Endothelial cell of umbilical vein (primary cell): ENCODE measurements at regions of chr6 and their contacts with region 1.

Region 1: DNA sequence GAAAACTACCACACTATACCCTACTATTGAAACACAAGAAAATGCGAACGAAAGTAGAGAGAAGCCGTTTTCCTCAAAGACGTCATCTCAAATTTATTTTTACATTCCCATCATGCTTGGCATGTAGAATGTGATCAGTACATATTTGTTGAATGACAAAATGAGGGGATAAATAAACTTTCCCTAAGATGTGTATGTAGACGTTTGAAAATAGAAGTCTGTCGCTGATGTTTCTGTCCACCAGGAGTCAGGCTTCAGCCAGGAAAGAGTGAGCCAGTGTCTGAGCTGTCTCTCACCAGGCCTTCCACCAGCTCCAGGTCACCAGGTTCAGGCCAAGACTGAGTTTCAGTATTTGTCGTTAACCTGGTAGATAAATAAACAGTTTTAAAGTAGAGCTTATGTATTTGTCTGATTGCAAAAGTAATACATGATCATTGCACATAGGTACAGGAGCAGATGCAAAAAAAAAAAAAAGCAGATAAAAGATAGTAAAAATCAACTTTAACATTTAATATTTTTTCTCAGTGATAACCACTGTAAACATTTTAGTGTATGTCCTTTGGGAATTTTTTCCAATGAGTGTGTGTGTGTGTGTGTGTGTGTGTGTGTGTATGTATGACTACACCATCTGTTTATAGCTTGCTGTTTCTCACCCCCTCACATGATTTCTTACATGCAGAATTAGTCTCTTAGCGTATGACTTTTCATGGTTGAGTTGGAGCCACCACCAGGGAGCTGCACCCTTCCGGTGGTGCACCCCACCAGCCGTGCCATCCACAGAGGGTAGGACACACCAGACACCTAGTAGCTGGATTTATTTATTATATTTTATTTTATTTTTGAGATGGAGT is 26.2 kb downstream of the WRNIP1 start:
- DNase-seq: peak; percentile 92
- H3K4me3 ChIP-seq: no peak overlapping the region
- H3K27ac ChIP-seq: peak overlapping the region; percentile 25
- H3K4me1 ChIP-seq: peaks cover 5% of the 10 kb centered on the region
- H3K27me3 ChIP-seq: no peaks in the 10 kb centered on the region
- CTCF ChIP-seq: peak; percentile 71 to 79
- POLR2A ChIP-seq: no peak

Region 2: GRCh38 chr6:2765166-2765895 is 26.0 kb before region 1 on chr6 and contains the start of gene WRNIP1:
- CTCF ChIA-PET with region 1: interaction called, 14 read pairs
- POLR2A ChIA-PET with region 1: no interaction called
- dilution Hi-C with region 1: no loop called
- intact Hi-C with region 1: no loop called
- DNase-seq: peak; percentile 99
- H3K4me3 ChIP-seq: peak within 1 kb of the TSS; percentile 72 to 98 (median 97)
- H3K27ac ChIP-seq: peak within 1 kb of the TSS; percentile 79
- H3K4me1 ChIP-seq: peaks cover 40% of the 10 kb centered on the region
- H3K27me3 ChIP-seq: no peaks in the 10 kb centered on the region
- CTCF ChIP-seq: peak; percentile 65 to 66
- POLR2A ChIP-seq: no peak
- total RNA-seq, gene WRNIP1: 47.7 and 50.1 TPM in 2 replicates

Region 3: DNA sequence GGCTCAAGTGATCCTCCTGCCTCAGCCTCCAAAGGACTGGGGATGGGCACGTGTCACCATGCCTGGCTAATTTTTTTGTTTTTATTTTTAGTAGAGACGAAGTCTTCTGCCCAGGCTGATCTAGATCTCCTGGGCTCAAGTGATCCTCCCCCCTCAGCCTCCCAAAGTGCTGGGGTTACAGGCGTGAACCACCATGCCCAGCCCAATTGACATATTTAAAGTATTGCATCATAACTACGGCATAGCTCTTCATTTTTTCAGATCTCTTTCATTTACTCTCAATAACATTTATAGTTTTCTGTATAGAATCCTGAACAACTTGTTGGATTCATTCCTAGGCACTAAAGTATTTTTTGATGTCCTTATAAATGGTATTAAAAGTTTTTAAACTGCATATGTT is 37.3 kb after region 1 on chr6:
- CTCF ChIA-PET with region 1: interaction called, 11 read pairs
- POLR2A ChIA-PET with region 1: no interaction called
- dilution Hi-C with region 1: no loop called
- intact Hi-C with region 1: no loop called
- DNase-seq: no peak
- H3K4me3 ChIP-seq: no peak overlapping the region
- H3K27ac ChIP-seq: no peak overlapping the region
- H3K4me1 ChIP-seq: peaks cover 16% of the 10 kb centered on the region
- H3K27me3 ChIP-seq: no peaks in the 10 kb centered on the region
- CTCF ChIP-seq: no peak
- POLR2A ChIP-seq: no peak

Region 4: GRCh38 chr6:2853761-2854395 is 62.5 kb after region 1 on chr6:
- CTCF ChIA-PET with region 1: interaction called, 36 read pairs
- POLR2A ChIA-PET with region 1: no interaction called
- dilution Hi-C with region 1: no loop called
- intact Hi-C with region 1: loop called (anchors 1 kb)
- DNase-seq: peak; percentile 85
- H3K4me3 ChIP-seq: peak overlapping the region in 1 of 3 experiments; percentile 57
- H3K27ac ChIP-seq: peak overlapping the region; percentile 96
- H3K4me1 ChIP-seq: peaks cover 68% of the 10 kb centered on the region
- H3K27me3 ChIP-seq: no peaks in the 10 kb centered on the region
- CTCF ChIP-seq: peak; percentile 11 to 30
- POLR2A ChIP-seq: no peak

Region 5: GRCh38 chr6:2911171-2911570 is 119.8 kb after region 1 on chr6:
- CTCF ChIA-PET with region 1: interaction called, 23 read pairs
- POLR2A ChIA-PET with region 1: no interaction called
- dilution Hi-C with region 1: no loop called
- intact Hi-C with region 1: loop called (anchors 1 kb)
- DNase-seq: no peak
- H3K4me3 ChIP-seq: no peak overlapping the region
- H3K27ac ChIP-seq: no peak overlapping the region
- H3K4me1 ChIP-seq: no peaks in the 10 kb centered on the region
- H3K27me3 ChIP-seq: no peaks in the 10 kb centered on the region
- CTCF ChIP-seq: no peak
- POLR2A ChIP-seq: no peak

Region 6: DNA sequence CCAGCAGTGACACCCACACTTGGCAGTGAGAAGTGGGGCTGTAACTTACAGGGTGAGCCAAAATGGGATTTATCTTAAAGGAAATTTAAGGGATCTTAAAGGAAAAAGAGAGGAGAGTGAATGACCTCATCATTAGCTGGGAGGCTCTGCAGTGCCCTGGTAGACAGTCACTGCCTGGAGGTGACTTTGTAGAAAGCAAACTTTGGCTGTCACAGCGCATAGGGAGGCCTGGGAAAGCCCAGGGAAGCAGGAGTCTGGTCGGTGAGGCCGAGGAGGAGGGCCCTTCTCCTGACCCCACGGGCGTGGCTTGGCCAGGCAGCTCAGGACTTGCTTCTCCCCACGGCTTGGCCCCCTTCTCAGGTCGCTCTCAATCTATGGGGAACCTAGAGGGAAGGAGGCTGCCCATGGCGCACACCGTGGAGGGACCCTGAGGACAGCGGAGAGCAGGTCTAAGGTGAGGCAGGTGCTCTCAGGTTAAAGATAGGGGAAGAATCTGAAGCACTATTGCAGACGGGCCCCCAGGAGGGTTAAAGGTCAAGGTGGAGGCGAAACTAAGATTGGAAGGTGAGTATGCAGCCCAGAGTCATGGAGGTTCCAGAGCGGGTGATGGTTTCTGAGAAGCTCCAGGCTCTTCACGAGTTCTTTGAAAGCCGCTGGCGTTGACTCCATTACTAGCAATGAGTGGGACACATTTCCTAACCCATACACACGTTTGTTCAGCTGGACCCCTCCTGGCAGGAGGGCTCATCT is 261.3 kb after region 1 on chr6:
- CTCF ChIA-PET with region 1: no interaction called
- POLR2A ChIA-PET with region 1: no interaction called
- dilution Hi-C with region 1: no loop called
- intact Hi-C with region 1: loop called (anchors 1 kb)
- DNase-seq: no peak
- H3K4me3 ChIP-seq: no peak overlapping the region
- H3K27ac ChIP-seq: no peak overlapping the region
- H3K4me1 ChIP-seq: peaks cover 9% of the 10 kb centered on the region
- H3K27me3 ChIP-seq: peaks cover 3 to 8% of the 10 kb centered on the region in 2 experiments
- CTCF ChIP-seq: no peak
- POLR2A ChIP-seq: no peak